HepG2 (cell line): ENCODE measurements at regions of chr10 and their contacts with region 1.

Region 1: GRCh38 chr10:43420369-43421200 is 11.6 kb upstream of the HNRNPF start:
- DNase-seq: peak; percentile 96
- ATAC-seq: peak; percentile 92
- H3K4me3 ChIP-seq: peak overlapping the region; percentile 27 to 64 (median 47); a peak in 5 of 6 replicates
- H3K27ac ChIP-seq: peak overlapping the region; percentile 99
- H3K4me1 ChIP-seq: peaks cover 70% of the 10 kb centered on the region
- H3K27me3 ChIP-seq: no peaks in the 10 kb centered on the region
- CTCF ChIP-seq: no peak; the same call in none of the 2 replicates
- EP300 ChIP-seq: peak in 1 of 2 experiments; percentile 78; a peak in 3 of 4 replicates
- POLR2A ChIP-seq: peak; percentile 72 to 83
- RAD21 ChIP-seq: peak; percentile 55

Region 2: DNA sequence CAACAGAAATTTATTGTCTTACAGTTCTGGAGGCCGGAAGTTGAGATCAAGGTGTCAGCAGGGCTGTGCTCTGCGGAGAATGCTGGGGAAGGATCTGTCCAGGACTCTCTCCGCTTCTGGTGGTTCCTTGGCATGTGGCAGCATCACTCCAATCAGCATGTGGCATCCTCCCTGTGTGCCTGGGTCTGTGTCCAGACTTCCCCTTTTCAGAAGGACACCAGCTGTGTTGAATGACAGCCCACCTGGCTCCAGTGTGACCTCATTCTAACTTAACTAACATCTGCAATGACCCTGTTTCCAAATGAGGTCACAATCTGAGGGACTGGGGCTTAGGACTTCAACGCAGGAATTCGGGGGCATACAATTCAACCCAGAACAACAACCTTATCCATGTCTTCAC is 496.1 kb before region 1 on chr10:
- CTCF ChIA-PET with region 1: no interaction called
- POLR2A ChIA-PET with region 1: no interaction called
- in situ Hi-C with region 1: no loop called
- intact Hi-C with region 1: no loop called
- DNase-seq: no peak
- ATAC-seq: no peak
- H3K4me3 ChIP-seq: no peak overlapping the region
- H3K27ac ChIP-seq: no peak overlapping the region
- H3K4me1 ChIP-seq: no peaks in the 10 kb centered on the region
- H3K27me3 ChIP-seq: peaks cover 6 to 22% of the 10 kb centered on the region in 2 experiments; a peak in 4 of 5 replicates
- CTCF ChIP-seq: no peak
- EP300 ChIP-seq: no peak
- POLR2A ChIP-seq: no peak
- RAD21 ChIP-seq: no peak

Region 3: GRCh38 chr10:43407576-43408330 is 12.8 kb before region 1 on chr10:
- CTCF ChIA-PET with region 1: no interaction called
- POLR2A ChIA-PET with region 1: interaction called, 33 read pairs
- in situ Hi-C with region 1: no loop called
- intact Hi-C with region 1: loop called (anchors 1 kb)
- DNase-seq: peak; percentile 89
- ATAC-seq: peak; percentile 53
- H3K4me3 ChIP-seq: peak overlapping the region; percentile 86 to 95 (median 87)
- H3K27ac ChIP-seq: peak overlapping the region; percentile 100
- H3K4me1 ChIP-seq: peaks cover 66% of the 10 kb centered on the region
- H3K27me3 ChIP-seq: no peaks in the 10 kb centered on the region; a peak in 1 of 5 replicates
- CTCF ChIP-seq: peak; percentile 59
- EP300 ChIP-seq: no peak; a peak in 1 of 4 replicates
- POLR2A ChIP-seq: peak; percentile 78 to 94
- RAD21 ChIP-seq: peak; percentile 34; the same call in 1 of the 2 replicates

Region 4: GRCh38 chr10:43436400-43437140 is 16.0 kb after region 1 on chr10 and contains the start of gene ZNF487:
- CTCF ChIA-PET with region 1: interaction called, 3 read pairs
- POLR2A ChIA-PET with region 1: interaction called, 33 read pairs
- in situ Hi-C with region 1: no loop called
- intact Hi-C with region 1: no loop called
- DNase-seq: peak; percentile 80
- ATAC-seq: peak; percentile 96
- H3K4me3 ChIP-seq: peak within 1 kb of the TSS; percentile 63 to 98 (median 87)
- H3K27ac ChIP-seq: peak within 1 kb of the TSS; percentile 100
- H3K4me1 ChIP-seq: peaks cover 29% of the 10 kb centered on the region
- H3K27me3 ChIP-seq: no peaks in the 10 kb centered on the region; a peak in 1 of 5 replicates
- CTCF ChIP-seq: peak; percentile 69
- EP300 ChIP-seq: peak in 1 of 2 experiments; percentile 26; a peak in 1 of 4 replicates
- POLR2A ChIP-seq: peak; percentile 88 to 89
- RAD21 ChIP-seq: peak; percentile 62; the same call in 1 of the 2 replicates
- total RNA-seq, gene ZNF487: 6.1 and 7.4 TPM in 2 replicates